ENCODE measurements at regions of chr2 and their contacts with region 1.

Region 1: DNA sequence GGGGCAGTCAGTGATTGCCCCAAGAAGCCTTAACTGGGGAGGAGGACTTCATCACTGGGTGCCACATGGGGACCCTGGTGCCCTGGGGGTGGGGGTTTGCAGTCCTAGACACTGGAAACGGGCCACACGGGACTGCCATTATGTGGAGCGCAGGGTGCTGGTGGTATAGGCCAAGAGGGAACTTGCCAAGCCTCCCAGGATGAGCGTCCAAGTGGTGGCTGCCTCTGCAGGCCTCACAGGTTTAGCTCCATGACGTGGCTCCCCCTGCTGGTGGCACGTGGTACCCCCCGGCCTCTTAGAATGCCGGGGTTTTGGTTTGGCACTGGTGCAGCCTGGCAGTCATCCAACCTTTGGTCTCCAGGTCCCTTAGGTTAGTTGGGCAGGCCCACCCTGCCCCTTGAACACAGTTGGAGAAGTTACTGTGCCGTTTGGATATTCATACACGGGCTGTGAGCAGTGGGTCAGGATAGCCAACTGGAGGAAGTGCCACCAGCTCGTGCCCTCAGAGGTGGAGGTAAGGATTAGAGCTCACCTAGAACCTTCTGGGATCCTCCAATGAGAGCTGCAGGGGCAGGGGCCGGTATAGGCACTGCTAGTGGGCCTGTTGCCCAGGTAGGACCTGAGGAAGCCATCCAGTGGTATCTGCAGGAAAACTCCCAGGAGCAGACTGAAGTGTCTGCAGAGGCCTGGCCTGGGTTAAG is 5.6 kb downstream of the PTMA start:
- DNase-seq: peak; percentile 68 to 91
- H3K4me3 ChIP-seq: no peak overlapping the region
- H3K27ac ChIP-seq: peak overlapping the region; percentile 36; the same call in 1 of the 2 replicates
- H3K4me1 ChIP-seq: peaks cover 30% of the 10 kb centered on the region
- H3K27me3 ChIP-seq: no peaks in the 10 kb centered on the region
- CTCF ChIP-seq: peak; percentile 91

Region 2: GRCh38 chr2:231563378-231563961 is 150.4 kb before region 1 on chr2:
- CTCF ChIA-PET with region 1: interaction called, 3 read pairs
- POLR2A ChIA-PET with region 1: no interaction called
- intact Hi-C with region 1: loop called (anchors 1 kb)
- DNase-seq: peak in 1 of 2 experiments; percentile 61
- H3K4me3 ChIP-seq: no peak overlapping the region
- H3K27ac ChIP-seq: no peak overlapping the region
- H3K4me1 ChIP-seq: no peaks in the 10 kb centered on the region
- H3K27me3 ChIP-seq: no peaks in the 10 kb centered on the region
- CTCF ChIP-seq: peak; percentile 62

Region 3: DNA sequence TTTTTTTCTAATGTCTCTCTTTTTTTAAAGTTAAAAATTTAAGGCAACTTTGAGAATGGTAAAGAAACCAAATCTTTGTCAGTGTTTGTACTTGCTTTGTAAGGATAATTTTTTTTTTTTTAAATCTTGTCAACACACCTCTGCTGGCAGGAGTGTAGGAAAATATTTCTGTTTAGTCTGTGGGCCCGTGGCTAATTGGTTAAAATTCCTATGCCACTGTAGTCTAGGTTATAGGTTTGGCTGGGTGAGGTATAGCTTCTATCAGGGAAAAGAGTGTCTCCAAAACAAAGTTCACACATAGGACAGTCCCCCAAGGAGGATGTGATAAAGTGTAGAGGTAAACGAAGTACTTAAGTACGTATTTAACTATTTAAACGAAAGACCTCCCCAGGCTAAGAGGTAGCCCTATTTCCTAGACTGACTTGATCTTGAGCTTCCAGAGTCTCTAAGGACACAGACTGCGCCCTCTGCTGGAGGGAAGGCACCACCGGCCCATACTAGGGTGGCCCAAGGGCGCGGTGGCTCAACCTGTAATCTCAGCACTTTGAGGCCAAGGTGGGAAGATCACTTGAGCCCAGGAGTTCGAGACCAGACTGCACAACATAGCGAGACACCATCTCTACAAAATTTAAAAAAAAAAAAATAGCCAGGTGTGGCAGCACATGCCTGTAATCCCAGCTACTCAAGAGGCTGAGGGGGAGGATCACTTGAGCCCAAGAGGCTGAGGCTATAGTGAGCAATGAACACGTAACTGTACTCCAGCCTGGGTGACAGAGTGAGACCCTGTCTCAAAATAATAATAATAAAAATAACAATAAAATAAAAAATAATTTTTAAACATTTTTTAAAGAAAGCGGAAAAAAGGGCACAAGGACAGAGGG is 112.3 kb before region 1 on chr2:
- CTCF ChIA-PET with region 1: interaction called, 20 read pairs
- POLR2A ChIA-PET with region 1: interaction called, 3 read pairs
- intact Hi-C with region 1: no loop called
- DNase-seq: peak; percentile 67 to 80
- H3K4me3 ChIP-seq: no peak overlapping the region
- H3K27ac ChIP-seq: no peak overlapping the region
- H3K4me1 ChIP-seq: peaks cover 13% of the 10 kb centered on the region; the same call in 1 of the 2 replicates
- H3K27me3 ChIP-seq: no peaks in the 10 kb centered on the region
- CTCF ChIP-seq: peak; percentile 88

Region 4: GRCh38 chr2:231648587-231649174 is 65.2 kb before region 1 on chr2:
- CTCF ChIA-PET with region 1: interaction called, 7 read pairs
- POLR2A ChIA-PET with region 1: no interaction called
- intact Hi-C with region 1: loop called (anchors 1 kb)
- DNase-seq: peak; percentile 70 to 89
- H3K4me3 ChIP-seq: no peak overlapping the region
- H3K27ac ChIP-seq: no peak overlapping the region
- H3K4me1 ChIP-seq: peaks cover 35% of the 10 kb centered on the region
- H3K27me3 ChIP-seq: no peaks in the 10 kb centered on the region
- CTCF ChIP-seq: peak; percentile 85

Region 5: DNA sequence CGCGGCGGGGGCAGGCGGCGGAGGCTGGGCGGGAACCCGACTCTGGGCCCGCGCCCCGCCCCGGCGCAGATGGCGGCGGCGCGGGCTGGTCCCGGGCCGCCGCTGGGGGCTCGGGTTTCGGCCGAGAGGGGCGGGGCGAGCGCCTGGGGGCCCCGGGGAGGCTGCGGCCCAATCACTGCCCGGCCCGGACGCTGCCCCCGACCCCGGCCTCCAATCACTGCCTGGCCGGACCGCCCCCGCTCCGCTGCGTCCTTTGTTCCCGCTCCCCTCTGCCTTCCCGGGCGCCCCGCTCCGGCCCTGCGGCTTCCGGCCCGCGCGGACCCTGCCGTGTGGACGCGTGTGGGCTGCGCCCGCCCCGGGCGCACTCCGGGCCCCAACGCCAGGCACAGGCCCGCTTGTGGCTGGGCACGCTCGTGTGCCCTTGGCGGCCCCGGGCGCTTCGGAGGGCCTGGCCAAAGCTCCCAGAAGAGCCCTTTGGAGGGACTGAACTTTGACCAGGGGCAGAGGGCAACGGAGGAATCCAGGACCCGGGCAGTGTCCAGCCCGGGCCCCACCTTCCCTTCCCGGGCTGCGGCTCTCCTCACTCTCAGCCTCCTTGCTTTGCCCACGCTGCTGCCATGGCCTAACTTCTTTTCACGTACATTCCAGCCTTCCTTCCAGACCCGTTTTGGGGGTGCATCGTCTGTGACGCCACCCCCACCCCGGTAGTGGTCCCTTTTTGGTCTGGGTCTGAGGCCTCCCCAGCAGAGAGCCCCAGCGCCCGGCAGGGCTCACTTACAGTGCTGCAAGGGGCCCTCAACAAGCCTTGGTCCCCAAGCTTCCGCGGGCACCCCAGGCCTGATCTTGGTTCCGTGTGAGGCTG is 32.7 kb before region 1 on chr2:
- CTCF ChIA-PET with region 1: interaction called, 32 read pairs
- POLR2A ChIA-PET with region 1: interaction called, 12 read pairs
- intact Hi-C with region 1: loop called (anchors 1 kb)
- DNase-seq: peak; percentile 61 to 93
- H3K4me3 ChIP-seq: peak overlapping the region; percentile 60
- H3K27ac ChIP-seq: peak overlapping the region; percentile 92
- H3K4me1 ChIP-seq: peaks cover 24% of the 10 kb centered on the region
- H3K27me3 ChIP-seq: no peaks in the 10 kb centered on the region
- CTCF ChIP-seq: no peak

Region 6: DNA sequence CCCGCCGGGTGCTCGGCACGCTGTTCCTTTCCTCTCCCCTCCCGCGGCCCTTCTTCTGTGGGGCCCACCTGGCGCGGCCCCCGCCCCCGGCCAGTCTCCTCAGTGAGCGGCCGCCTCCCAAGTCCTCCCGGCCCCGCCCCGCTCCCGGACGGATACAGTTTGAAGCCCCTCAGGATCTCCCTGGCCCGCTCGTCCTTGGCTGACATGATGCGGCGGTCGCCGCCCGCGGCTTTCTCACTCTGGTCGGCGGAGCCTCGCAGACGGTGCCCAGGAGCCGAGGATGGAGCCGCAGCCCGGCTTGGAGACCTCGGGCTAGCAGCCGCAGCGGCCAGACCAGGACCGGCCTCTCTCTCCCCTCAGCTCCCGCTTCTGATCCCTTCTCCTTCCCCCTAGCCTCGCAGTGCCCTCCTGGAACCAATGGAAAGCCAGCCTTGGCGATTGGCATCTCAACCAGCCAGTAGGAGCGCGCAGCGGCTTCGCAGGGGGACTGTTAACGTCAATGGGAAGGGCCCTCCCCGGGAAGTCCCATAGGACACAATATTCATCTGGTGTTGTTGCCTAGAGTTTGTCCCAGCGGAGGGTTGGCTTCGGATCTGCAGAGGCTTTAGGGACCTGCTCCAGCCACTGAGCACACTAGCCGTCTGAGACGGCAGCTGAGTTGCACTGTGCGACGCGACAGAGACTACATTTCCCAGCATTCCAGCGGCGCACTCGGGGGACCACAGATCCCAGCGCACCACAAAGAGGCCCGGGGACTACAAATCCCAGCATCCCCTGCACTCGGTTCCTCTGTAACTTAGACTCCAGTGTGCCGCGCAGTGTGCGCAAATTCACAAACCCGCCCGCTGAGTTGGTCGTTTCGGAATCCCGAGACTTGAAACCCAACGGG is 67.3 kb after region 1 on chr2 and contains the start of gene PDE6D:
- CTCF ChIA-PET with region 1: no interaction called
- POLR2A ChIA-PET with region 1: no interaction called
- intact Hi-C with region 1: loop called (anchors 5 kb)
- DNase-seq: peak; percentile 93 to 98
- H3K4me3 ChIP-seq: peak within 1 kb of the TSS; percentile 78
- H3K27ac ChIP-seq: no peak within 1 kb of the TSS
- H3K4me1 ChIP-seq: peaks cover 20% of the 10 kb centered on the region
- H3K27me3 ChIP-seq: no peaks in the 10 kb centered on the region
- CTCF ChIP-seq: no peak
- total RNA-seq, gene PDE6D: 32.2 and 32.9 TPM in 2 replicates

Measured in PC-9 (cell line).